Sigmoid colon (tissue), 7 donors: ENCODE measurements at regions of chr1 and their contacts with region 1.

Region 1: DNA sequence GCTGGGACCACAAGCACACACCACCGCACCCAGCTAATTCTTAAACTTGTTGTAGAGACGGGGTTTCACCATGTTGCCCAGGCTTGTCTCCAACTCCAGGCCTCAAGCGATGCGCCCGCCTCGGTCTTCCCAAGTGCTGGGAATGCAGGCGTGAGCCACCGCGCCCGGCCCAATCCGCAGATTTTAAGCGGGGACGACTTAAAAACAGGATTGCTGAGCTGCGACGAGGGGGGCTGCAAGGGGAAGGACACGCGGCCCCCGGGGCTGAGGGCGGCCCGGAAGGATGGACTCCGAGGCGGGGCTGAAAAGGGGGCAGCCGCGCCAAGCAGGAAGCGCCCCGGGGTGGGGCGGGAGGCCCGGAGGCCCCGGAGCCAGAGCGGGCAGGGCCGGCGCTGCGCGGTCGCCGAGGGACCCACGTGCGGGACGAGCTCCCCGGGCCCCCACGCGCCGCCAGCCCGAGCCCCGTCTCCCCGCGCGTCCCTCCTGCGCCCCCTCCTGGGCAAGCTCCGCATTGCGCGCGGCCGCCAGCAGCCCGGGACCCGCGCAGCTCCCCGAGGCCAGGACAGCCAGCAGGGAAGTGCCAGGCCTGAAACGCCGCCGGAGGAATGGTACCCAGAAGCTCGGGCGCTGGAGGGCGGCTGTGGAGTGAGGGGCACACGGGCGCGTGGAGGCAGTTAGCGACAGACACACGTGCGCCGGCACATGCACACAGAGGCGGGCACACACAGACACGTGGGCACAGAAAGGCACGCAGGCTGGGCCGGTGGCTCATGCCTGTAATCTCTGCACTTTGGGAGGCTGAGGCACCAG is 5.5 kb upstream of the PRKCZ start:
- DNase-seq: peak; percentile 80
- H3K4me3 ChIP-seq: peak overlapping the region in 3 of 4 donors; percentile 14 to 39 (median 38)
- H3K27ac ChIP-seq: no peak overlapping the region
- H3K4me1 ChIP-seq: peaks cover 0 to 27% (median 14%) of the 10 kb centered on the region in 4 donors
- H3K27me3 ChIP-seq: peaks cover 6 to 63% (median 51%) of the 10 kb centered on the region in 3 donors
- CTCF ChIP-seq: peak; percentile 41 to 92 (median 55)
- EP300 ChIP-seq: no peak
- POLR2A ChIP-seq: no peak

Region 2: GRCh38 chr1:1943834-1944570 is 100.7 kb before region 1 on chr1:
- intact Hi-C with region 1: loop called (anchors 5 kb)
- DNase-seq: no peak
- H3K4me3 ChIP-seq: peak overlapping the region in 2 of 4 donors; percentile 15 to 24
- H3K27ac ChIP-seq: no peak overlapping the region
- H3K4me1 ChIP-seq: peaks cover 0 to 8% (median 6%) of the 10 kb centered on the region in 4 donors
- H3K27me3 ChIP-seq: peaks cover 2 to 50% (median 9%) of the 10 kb centered on the region in 3 donors
- CTCF ChIP-seq: peak; percentile 52 to 90 (median 72)
- EP300 ChIP-seq: no peak
- POLR2A ChIP-seq: no peak

Region 3: GRCh38 chr1:1985375-1986050 is 59.2 kb before region 1 on chr1:
- intact Hi-C with region 1: no loop called
- DNase-seq: no peak
- H3K4me3 ChIP-seq: no peak overlapping the region
- H3K27ac ChIP-seq: no peak overlapping the region
- H3K4me1 ChIP-seq: no peaks in the 10 kb centered on the region
- H3K27me3 ChIP-seq: peaks cover 0 to 39% (median 30%) of the 10 kb centered on the region in 3 donors
- CTCF ChIP-seq: no peak
- EP300 ChIP-seq: no peak
- POLR2A ChIP-seq: no peak